ENCODE measurements at regions of chr16 and their contacts with region 1.

Region 1: GRCh38 chr16:982145-983043 is 824 bp downstream of the SOX8 start:
- DNase-seq: no peak
- ATAC-seq: no peak
- H3K4me3 ChIP-seq: no peak overlapping the region
- H3K27ac ChIP-seq: no peak overlapping the region
- H3K4me1 ChIP-seq: no peaks in the 10 kb centered on the region
- H3K27me3 ChIP-seq: peaks cover 83% of the 10 kb centered on the region
- CTCF ChIP-seq: no peak
- POLR2A ChIP-seq: no peak
- RAD21 ChIP-seq: no peak

Region 2: DNA sequence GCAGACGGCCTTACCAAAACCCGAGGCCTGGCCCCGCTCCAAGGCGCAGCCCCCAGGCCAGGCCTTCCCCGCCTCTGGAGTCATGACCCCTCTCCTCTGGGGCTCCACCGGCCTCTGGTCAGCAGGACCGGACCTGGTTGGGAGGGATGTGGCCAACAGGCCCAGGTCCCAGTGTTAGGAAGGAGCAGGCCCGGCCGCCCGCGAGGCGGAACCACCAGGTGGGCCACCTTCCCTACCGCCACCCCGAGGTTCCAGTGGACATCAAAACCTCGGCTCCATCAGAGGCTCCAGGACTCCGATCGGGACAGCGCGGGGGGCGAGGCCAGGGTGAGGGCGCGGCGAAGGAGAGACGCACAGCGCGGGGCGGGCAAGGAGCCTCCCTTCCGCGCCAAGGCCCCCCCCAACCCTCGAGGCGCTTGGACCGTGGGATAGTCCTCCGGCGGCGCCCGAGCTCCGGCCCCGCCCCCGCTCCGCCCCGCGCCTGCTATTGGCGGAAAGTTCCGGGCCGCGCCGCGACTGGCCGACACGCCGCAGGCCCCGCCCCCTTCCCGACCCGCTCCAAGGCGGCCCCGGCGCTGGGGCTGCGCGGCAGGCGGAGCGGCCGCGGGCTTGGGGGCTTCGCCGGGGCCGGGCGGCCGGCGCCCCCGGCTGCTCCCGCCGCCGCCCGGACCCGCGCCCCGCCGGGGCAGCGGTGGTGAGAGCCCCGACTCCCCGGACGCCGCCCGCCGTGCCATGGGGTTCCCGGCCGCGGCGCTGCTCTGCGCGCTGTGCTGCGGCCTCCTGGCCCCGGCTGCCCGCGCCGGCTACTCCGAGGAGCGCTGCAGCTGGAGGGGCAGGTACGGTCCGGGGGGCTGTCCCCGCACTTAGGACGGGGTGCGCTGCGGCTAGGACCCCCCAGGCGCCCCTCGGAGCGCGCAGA is 267.6 kb before region 1 on chr16 and contains the start of gene METRN:
- CTCF ChIA-PET with region 1: no interaction called
- POLR2A ChIA-PET with region 1: no interaction called
- dilution Hi-C with region 1: no loop called
- in situ Hi-C with region 1: no loop called
- intact Hi-C with region 1: loop called (anchors 5 kb)
- DNase-seq: peak; percentile 78
- ATAC-seq: peak; percentile 83
- H3K4me3 ChIP-seq: peak within 1 kb of the TSS; percentile 70
- H3K27ac ChIP-seq: no peak within 1 kb of the TSS; the same call in 1 of the 2 replicates
- H3K4me1 ChIP-seq: peaks cover 14% of the 10 kb centered on the region
- H3K27me3 ChIP-seq: no peaks in the 10 kb centered on the region
- CTCF ChIP-seq: no peak
- POLR2A ChIP-seq: no peak
- RAD21 ChIP-seq: no peak
- total RNA-seq, gene METRN: 6.1 and 8.6 TPM in 2 replicates

Region 3: DNA sequence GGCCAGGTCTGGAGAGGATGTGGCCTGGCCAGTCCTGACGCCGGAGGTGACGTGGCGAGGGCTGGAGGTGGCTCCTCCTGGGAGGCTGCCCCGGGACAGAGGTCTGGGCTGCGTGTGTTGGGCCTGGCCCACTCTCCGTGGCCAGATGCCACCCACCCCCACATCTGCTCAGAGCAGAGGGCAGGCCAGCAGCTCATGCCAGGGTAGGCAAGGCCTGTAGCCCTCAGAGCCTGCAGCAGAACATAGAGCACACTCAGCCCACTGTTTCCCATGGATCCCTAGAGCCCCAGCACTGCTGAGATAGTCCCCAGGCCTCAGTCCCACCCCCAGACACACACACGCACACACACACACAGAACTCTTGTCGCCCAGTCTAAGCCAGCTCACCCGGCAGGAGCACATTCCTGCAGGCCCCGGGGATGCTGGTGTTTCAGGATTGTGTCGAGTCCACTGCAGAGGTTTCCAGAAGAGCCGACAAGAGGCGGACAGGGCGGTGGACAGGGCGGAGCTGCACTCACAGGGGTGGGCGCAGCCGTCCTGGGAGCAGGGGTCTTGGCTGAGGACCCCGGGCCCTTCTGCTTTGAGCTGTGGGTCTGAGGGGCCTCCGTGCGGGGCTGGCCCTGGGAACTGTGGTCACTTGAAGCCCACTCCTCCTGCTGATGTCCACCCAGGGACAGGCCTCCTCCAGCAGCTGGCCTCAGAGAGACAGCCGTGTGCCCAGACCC is 32.5 kb after region 1 on chr16:
- CTCF ChIA-PET with region 1: no interaction called
- POLR2A ChIA-PET with region 1: interaction called, 10 read pairs
- dilution Hi-C with region 1: no loop called
- in situ Hi-C with region 1: no loop called
- intact Hi-C with region 1: no loop called
- DNase-seq: no peak
- ATAC-seq: no peak
- H3K4me3 ChIP-seq: no peak overlapping the region
- H3K27ac ChIP-seq: no peak overlapping the region
- H3K4me1 ChIP-seq: no peaks in the 10 kb centered on the region
- H3K27me3 ChIP-seq: peaks cover 41% of the 10 kb centered on the region
- CTCF ChIP-seq: no peak
- POLR2A ChIP-seq: no peak
- RAD21 ChIP-seq: no peak

Measured in IMR-90 (cell line).